OCI-LY7 (cell line): ENCODE measurements at regions of chr3 and their contacts with region 1.

Region 1: GRCh38 chr3:56855856-56856512 is 54.2 kb upstream of the ARHGEF3 start:
- DNase-seq: peak; percentile 57
- H3K4me3 ChIP-seq: no peak overlapping the region
- H3K27ac ChIP-seq: no peak overlapping the region
- H3K4me1 ChIP-seq: peaks cover 24% of the 10 kb centered on the region
- CTCF ChIP-seq: peak; percentile 94

Region 2: DNA sequence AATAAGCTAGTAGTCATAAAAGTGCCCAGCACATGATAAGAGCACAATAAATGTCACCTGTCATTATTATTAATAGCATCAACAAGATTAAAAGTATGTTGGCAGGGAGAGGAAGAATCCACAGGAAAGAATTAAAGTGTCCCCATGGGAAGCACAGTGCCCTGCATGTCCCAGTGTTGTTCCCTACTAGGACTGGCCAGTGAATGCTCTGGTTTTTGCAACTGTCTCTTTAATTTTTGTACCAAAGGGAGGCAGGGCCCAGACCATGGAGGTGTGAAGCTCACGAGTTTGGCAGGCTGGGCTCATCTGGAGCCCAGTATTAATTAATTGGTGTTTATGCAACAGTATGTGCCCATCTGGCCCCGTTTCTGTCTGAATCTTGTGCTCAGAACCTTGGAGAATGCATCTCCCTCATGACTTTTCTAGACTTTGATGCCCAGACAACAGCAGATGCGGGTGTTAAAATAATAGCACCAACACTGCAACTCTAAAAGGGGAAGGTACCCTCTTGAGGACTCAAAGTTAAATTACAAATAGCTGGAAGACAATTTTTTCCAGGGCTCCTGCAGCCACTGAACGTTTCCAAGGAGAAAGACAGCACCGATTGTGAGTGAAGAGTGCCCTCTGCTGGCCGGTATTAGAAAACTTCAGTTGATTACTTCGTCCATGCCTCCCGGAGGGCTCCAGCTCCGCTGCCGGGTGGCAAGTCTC is 132.6 kb after region 1 on chr3:
- CTCF ChIA-PET with region 1: no interaction called
- POLR2A ChIA-PET with region 1: no interaction called
- intact Hi-C with region 1: loop called (anchors 1 kb)
- DNase-seq: peak; percentile 78
- H3K4me3 ChIP-seq: no peak overlapping the region
- H3K27ac ChIP-seq: no peak overlapping the region
- H3K4me1 ChIP-seq: peaks cover 40% of the 10 kb centered on the region
- CTCF ChIP-seq: peak; percentile 99